Caco-2 (cell line): ENCODE measurements at regions of chr14 and their contacts with region 1.

Region 1: GRCh38 chr14:49106741-49107667 is 479.2 kb downstream of the RPS29 start:
- DNase-seq: peak; percentile 80 to 91
- H3K4me3 ChIP-seq: no peak overlapping the region; the same call in 1 of the 2 replicates
- H3K4me3 Mint-ChIP-seq: peak overlapping the region; percentile 42
- H3K27ac Mint-ChIP-seq: peak overlapping the region; percentile 76
- H3K4me1 ChIP-seq: peaks cover 32% of the 10 kb centered on the region
- H3K4me1 Mint-ChIP-seq: peaks cover 24% of the 10 kb centered on the region
- H3K27me3 ChIP-seq: no peaks in the 10 kb centered on the region
- H3K27me3 Mint-ChIP-seq: no peaks in the 10 kb centered on the region
- CTCF ChIP-seq: peak in 1 of 2 experiments; percentile 17

Region 2: GRCh38 chr14:49121246-49121645 is 14.2 kb after region 1 on chr14:
- CTCF ChIA-PET with region 1: no interaction called
- POLR2A ChIA-PET with region 1: no interaction called
- intact Hi-C with region 1: no loop called
- DNase-seq: no peak
- H3K4me3 ChIP-seq: no peak overlapping the region
- H3K4me3 Mint-ChIP-seq: no peak overlapping the region
- H3K27ac Mint-ChIP-seq: no peak overlapping the region
- H3K4me1 ChIP-seq: no peaks in the 10 kb centered on the region
- H3K4me1 Mint-ChIP-seq: no peaks in the 10 kb centered on the region
- H3K27me3 ChIP-seq: no peaks in the 10 kb centered on the region
- H3K27me3 Mint-ChIP-seq: no peaks in the 10 kb centered on the region
- CTCF ChIP-seq: no peak

Region 3: DNA sequence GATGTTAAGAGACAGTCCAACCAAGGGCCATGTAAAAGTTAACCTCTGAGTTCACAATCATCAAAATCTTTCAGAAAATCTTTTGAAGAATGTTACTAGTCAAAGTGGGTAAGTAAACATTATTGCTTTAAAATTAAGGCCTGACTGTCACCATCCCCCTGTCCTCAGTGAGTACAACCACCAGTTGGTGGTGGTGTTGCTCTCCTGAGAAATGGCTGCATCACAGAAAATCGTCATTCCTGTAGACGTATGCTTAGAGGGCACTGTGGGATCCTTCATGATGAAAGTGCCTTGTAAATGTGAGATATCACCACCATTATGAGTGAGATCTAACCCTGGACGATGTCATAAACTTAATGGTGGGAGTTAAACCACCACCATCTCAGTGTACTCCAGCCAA is 27.9 kb after region 1 on chr14:
- CTCF ChIA-PET with region 1: no interaction called
- POLR2A ChIA-PET with region 1: no interaction called
- intact Hi-C with region 1: loop called (anchors 1 kb)
- DNase-seq: peak in 1 of 2 experiments; percentile 8
- H3K4me3 ChIP-seq: no peak overlapping the region
- H3K4me3 Mint-ChIP-seq: no peak overlapping the region
- H3K27ac Mint-ChIP-seq: no peak overlapping the region
- H3K4me1 ChIP-seq: peaks cover 8% of the 10 kb centered on the region
- H3K4me1 Mint-ChIP-seq: no peaks in the 10 kb centered on the region
- H3K27me3 ChIP-seq: no peaks in the 10 kb centered on the region
- H3K27me3 Mint-ChIP-seq: no peaks in the 10 kb centered on the region
- CTCF ChIP-seq: no peak

Region 4: GRCh38 chr14:49703965-49704364 is 597.0 kb after region 1 on chr14:
- CTCF ChIA-PET with region 1: no interaction called
- POLR2A ChIA-PET with region 1: no interaction called
- intact Hi-C with region 1: no loop called
- DNase-seq: no peak
- H3K4me3 ChIP-seq: no peak overlapping the region
- H3K4me3 Mint-ChIP-seq: no peak overlapping the region
- H3K27ac Mint-ChIP-seq: no peak overlapping the region
- H3K4me1 ChIP-seq: no peaks in the 10 kb centered on the region
- H3K4me1 Mint-ChIP-seq: no peaks in the 10 kb centered on the region
- H3K27me3 ChIP-seq: no peaks in the 10 kb centered on the region
- H3K27me3 Mint-ChIP-seq: no peaks in the 10 kb centered on the region
- CTCF ChIP-seq: no peak